Activated CD8-positive, alpha-beta memory T cell treated with anti-CD3 and anti-CD28 coated beads, Interleukin-2, amount 10 ng/mL, durations not matched to agents 7 days and 5 days (primary cell): ENCODE measurements at regions of chr7 and their contacts with region 1.

Region 1: DNA sequence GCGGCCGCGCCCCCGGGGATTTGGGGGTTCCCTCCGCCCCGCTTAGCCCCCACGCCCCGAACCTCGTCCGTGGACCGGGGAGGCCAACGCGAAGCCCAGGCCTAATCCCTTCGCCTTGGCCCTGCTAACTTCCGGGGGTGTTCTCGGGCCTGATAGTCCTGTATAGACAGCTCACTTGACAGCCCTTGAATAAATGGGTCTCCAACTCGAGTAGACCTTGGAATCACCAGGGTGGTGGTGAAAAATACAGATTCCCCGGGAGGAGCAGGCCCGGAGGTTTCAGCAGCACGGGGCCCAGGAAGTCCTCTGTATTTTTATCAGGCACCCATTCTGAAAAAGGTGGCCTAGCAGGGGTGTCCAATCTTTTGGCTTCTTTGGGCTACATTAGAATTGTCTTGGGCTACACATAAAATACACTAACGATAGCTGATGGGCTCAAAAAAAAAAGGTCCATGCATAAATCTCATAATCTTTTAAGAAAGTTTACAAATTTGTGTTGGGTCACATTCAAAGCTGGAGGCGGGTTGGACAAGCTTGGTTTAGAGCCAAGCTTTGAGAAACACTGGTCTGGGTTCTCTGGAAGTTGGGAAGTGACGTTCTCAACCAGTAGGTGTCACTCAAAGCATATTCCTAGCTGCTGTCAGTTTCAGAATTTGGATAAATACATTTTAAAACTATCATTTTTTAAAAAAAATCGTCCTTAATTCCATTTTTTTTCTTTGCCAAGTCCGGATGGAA is 221.7 kb downstream of the PHTF2 start:
- DNase-seq: peak; percentile 56
- ATAC-seq: peak; percentile 47
- H3K4me3 Mint-ChIP-seq: peak overlapping the region; percentile 63
- H3K27ac Mint-ChIP-seq: peak overlapping the region; percentile 37
- H3K4me1 Mint-ChIP-seq: peaks cover 17% of the 10 kb centered on the region
- H3K27me3 Mint-ChIP-seq: peaks cover 45% of the 10 kb centered on the region

Region 2: GRCh38 chr7:78039790-78040776 is 19.8 kb after region 1 on chr7:
- CTCF ChIA-PET with region 1: interaction called, 39 read pairs
- DNase-seq: peak; percentile 58
- ATAC-seq: peak; percentile 85
- H3K4me3 Mint-ChIP-seq: no peak overlapping the region
- H3K27ac Mint-ChIP-seq: no peak overlapping the region
- H3K4me1 Mint-ChIP-seq: no peaks in the 10 kb centered on the region
- H3K27me3 Mint-ChIP-seq: peaks cover 16% of the 10 kb centered on the region